WTC11 (cell line): ENCODE measurements at regions of chr2 and their contacts with region 1.

Region 1: GRCh38 chr2:45607701-45608100 is 3.4 kb downstream of the SRBD1 start:
- DNase-seq: no peak
- ATAC-seq: peak; percentile 55
- H3K4me3 Mint-ChIP-seq: no peak overlapping the region
- H3K27ac Mint-ChIP-seq: 0 out of 2 replicates have a peak overlapping the region, but pooled peaks have one; percentile 19
- H3K4me1 Mint-ChIP-seq: peaks cover 30% of the 10 kb centered on the region
- H3K27me3 Mint-ChIP-seq: no peaks in the 10 kb centered on the region
- CTCF ChIP-seq: peak; percentile 43

Region 2: GRCh38 chr2:45435316-45435715 is 172.4 kb before region 1 on chr2:
- CTCF ChIA-PET with region 1: no interaction called
- POLR2A ChIA-PET with region 1: no interaction called
- DNase-seq: no peak
- ATAC-seq: no peak
- H3K4me3 Mint-ChIP-seq: no peak overlapping the region
- H3K27ac Mint-ChIP-seq: no peak overlapping the region; the same call in 1 of the 2 replicates
- H3K4me1 Mint-ChIP-seq: peaks cover 20% of the 10 kb centered on the region
- H3K27me3 Mint-ChIP-seq: no peaks in the 10 kb centered on the region
- CTCF ChIP-seq: no peak

Region 3: DNA sequence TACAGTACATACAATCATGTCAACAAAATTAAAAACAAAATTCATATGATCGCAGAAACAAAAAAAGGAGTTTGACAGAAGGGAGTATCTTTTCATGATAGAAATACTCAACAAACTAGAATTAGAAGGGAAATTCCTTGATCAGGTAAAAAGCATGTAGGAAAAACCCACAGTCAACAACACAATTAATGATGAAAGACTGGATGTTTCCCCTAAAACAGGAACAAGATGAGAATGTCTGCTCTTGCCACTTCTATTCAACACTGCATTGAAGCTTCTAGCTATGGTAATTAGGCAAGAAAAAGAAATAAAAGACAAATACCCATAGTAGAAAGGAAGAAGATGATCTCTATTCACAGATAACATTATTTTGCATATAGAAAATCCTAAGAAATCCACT is 83.7 kb before region 1 on chr2:
- CTCF ChIA-PET with region 1: no interaction called
- POLR2A ChIA-PET with region 1: no interaction called
- DNase-seq: no peak
- ATAC-seq: no peak
- H3K4me3 Mint-ChIP-seq: no peak overlapping the region
- H3K27ac Mint-ChIP-seq: no peak overlapping the region
- H3K4me1 Mint-ChIP-seq: no peaks in the 10 kb centered on the region; the same call in 1 of the 2 replicates
- H3K27me3 Mint-ChIP-seq: no peaks in the 10 kb centered on the region
- CTCF ChIP-seq: no peak

Region 4: DNA sequence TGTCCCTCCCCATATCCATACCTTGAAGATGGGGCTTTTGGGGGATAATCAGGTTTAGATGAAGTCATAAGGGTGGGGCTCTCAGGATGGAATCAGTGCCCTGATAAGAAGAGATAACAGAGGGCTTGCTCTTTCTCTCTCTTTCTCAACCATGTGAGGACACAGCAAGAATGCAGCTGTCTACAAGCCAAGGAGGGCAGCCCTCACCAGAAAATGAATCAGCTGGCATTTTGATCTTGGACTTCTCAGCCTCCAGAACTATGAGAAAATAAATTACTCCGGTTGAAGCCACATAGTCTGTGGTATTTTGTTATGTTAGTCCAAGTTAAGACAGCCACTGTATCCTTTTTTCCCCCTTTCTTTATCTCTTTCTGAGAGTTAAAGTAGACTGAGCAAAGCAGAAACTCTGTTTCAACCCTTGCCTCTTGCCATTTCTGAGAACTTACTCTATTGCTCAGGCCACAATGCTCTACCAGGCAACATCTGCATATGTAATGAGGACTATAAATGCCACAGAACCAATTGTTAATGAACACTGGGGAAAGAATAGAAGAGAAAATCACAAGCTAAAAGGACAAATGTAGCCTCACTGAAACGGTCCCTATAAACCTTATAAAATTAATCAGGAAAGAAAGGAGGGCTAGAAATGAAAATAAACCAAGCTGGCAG is 53.5 kb before region 1 on chr2:
- CTCF ChIA-PET with region 1: interaction called, 10 read pairs
- POLR2A ChIA-PET with region 1: no interaction called
- DNase-seq: no peak
- ATAC-seq: peak; percentile 51
- H3K4me3 Mint-ChIP-seq: no peak overlapping the region
- H3K27ac Mint-ChIP-seq: peak overlapping the region; percentile 62
- H3K4me1 Mint-ChIP-seq: peaks cover 24% of the 10 kb centered on the region
- H3K27me3 Mint-ChIP-seq: no peaks in the 10 kb centered on the region
- CTCF ChIP-seq: no peak

Region 5: DNA sequence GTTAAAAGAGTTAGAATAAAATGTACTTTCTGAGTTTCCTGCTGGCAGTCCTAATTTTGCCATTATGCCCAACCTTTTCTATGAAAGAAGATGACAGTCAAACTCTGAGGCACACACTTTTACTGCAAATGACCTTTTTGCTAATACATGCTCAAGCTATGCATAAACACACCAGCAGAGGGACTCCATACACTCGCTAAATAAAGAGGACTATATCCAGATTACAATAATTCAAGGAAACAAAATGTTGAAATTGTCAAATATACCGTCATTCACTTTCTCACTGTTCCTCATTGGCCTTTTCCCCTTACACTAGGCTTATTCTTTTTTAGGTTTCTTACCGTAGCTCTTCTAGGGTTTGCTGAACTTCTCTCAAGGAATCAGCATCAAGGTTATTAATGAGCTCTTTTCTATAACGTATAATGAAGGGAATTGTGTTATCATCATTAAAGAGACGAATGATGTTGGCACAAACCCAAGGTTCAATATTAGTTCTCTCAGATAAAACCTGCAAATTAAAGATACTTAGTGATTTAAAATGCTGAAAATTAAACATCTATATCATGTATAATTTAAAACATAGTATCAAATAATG is 22.3 kb before region 1 on chr2:
- CTCF ChIA-PET with region 1: interaction called, 19 read pairs
- POLR2A ChIA-PET with region 1: no interaction called
- DNase-seq: no peak
- ATAC-seq: peak; percentile 51; the same call in 1 of the 2 replicates
- H3K4me3 Mint-ChIP-seq: no peak overlapping the region
- H3K27ac Mint-ChIP-seq: no peak overlapping the region
- H3K4me1 Mint-ChIP-seq: peaks cover 23% of the 10 kb centered on the region
- H3K27me3 Mint-ChIP-seq: no peaks in the 10 kb centered on the region
- CTCF ChIP-seq: no peak